ENCODE measurements at regions of chr21 and their contacts with region 1.

Region 1: GRCh38 chr21:34510148-34511142 is 1.6 kb downstream of the KCNE1 start:
- DNase-seq: peak; percentile 39 to 84
- H3K4me3 ChIP-seq: peak overlapping the region in 1 of 2 donors; percentile 22
- H3K27ac ChIP-seq: no peak overlapping the region
- H3K4me1 ChIP-seq: no peaks in the 10 kb centered on the region
- H3K27me3 ChIP-seq: no peaks in the 10 kb centered on the region
- CTCF ChIP-seq: peak; percentile 71 to 82 (median 74)

Region 2: DNA sequence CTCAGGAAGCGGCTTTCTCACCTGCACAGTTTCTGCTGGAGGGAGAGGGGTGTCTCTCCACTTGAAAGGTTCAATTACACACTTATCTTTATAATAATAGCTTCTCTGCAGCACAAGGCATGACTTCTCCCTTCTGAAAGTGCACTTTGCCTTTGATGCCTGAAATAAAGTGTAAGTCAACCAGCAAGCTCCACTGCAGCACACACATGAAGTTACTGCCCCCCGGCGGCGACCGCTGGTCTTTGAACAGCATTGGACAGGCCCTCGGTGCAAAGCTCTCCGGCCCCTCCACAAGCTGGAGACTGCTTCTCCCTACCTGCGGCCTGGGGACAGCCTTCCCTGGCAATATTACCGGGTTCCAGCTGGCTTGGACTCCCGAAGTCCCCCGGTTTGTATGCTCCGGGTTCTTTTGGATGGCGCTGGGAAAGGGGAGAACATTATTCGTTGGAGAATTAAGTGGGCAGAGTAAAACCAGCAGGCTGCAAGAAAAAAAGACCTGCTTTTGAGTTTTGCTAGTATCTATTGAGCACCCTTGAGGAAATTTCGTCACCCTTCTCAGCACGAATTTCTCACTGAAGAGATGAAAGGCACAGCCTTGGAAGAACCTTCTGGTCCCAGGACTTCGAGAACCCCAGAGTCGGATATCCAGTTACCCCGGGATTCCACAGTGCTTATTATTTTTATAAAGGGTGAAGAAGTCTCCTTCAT is 92.7 kb after region 1 on chr21:
- intact Hi-C with region 1: loop called (anchors 1 kb)
- DNase-seq: peak; percentile 49 to 91
- H3K4me3 ChIP-seq: no peak overlapping the region
- H3K27ac ChIP-seq: no peak overlapping the region
- H3K4me1 ChIP-seq: peaks cover 0 to 5% of the 10 kb centered on the region in 2 donors
- H3K27me3 ChIP-seq: no peaks in the 10 kb centered on the region
- CTCF ChIP-seq: peak; percentile 67 to 85 (median 78)

Measured in ascending aorta (tissue), 2 donors.